CD14-positive monocyte (primary cell): ENCODE measurements at regions of chr13 and their contacts with region 1.

Region 1: GRCh38 chr13:76903544-76904162 is 17.4 kb upstream of the KCTD12 start:
- DNase-seq: peak; percentile 79 to 88 (median 82)
- H3K4me3 ChIP-seq: no peak overlapping the region
- H3K4me3 Mint-ChIP-seq: no peak overlapping the region
- H3K27ac ChIP-seq: no peak overlapping the region
- H3K27ac Mint-ChIP-seq: no peak overlapping the region
- H3K4me1 ChIP-seq: no peaks in the 10 kb centered on the region
- H3K4me1 Mint-ChIP-seq: peaks cover 4% of the 10 kb centered on the region
- H3K27me3 ChIP-seq: peaks cover 0 to 6% of the 10 kb centered on the region in 2 donors
- H3K27me3 Mint-ChIP-seq: peaks cover 4 to 8% (median 6%) of the 10 kb centered on the region in 3 donors
- CTCF ChIP-seq: peak; percentile 99

Region 2: GRCh38 chr13:75691183-75691582 is 1212.5 kb before region 1 on chr13:
- intact Hi-C with region 1: loop called in 1 of 2 experiments (anchors 5 kb)
- DNase-seq: no peak
- H3K4me3 ChIP-seq: no peak overlapping the region
- H3K4me3 Mint-ChIP-seq: no peak overlapping the region
- H3K27ac ChIP-seq: no peak overlapping the region
- H3K27ac Mint-ChIP-seq: no peak overlapping the region
- H3K4me1 ChIP-seq: no peaks in the 10 kb centered on the region
- H3K4me1 Mint-ChIP-seq: no peaks in the 10 kb centered on the region
- H3K27me3 ChIP-seq: no peaks in the 10 kb centered on the region
- H3K27me3 Mint-ChIP-seq: no peaks in the 10 kb centered on the region
- CTCF ChIP-seq: no peak

Region 3: GRCh38 chr13:75864718-75865117 is 1038.9 kb before region 1 on chr13:
- intact Hi-C with region 1: loop called in 1 of 2 experiments (anchors 5 kb)
- DNase-seq: no peak
- H3K4me3 ChIP-seq: no peak overlapping the region
- H3K4me3 Mint-ChIP-seq: no peak overlapping the region
- H3K27ac ChIP-seq: no peak overlapping the region
- H3K27ac Mint-ChIP-seq: no peak overlapping the region
- H3K4me1 ChIP-seq: no peaks in the 10 kb centered on the region
- H3K4me1 Mint-ChIP-seq: no peaks in the 10 kb centered on the region
- H3K27me3 ChIP-seq: no peaks in the 10 kb centered on the region
- H3K27me3 Mint-ChIP-seq: peaks cover 0 to 5% (median 4%) of the 10 kb centered on the region in 3 donors
- CTCF ChIP-seq: no peak

Region 4: DNA sequence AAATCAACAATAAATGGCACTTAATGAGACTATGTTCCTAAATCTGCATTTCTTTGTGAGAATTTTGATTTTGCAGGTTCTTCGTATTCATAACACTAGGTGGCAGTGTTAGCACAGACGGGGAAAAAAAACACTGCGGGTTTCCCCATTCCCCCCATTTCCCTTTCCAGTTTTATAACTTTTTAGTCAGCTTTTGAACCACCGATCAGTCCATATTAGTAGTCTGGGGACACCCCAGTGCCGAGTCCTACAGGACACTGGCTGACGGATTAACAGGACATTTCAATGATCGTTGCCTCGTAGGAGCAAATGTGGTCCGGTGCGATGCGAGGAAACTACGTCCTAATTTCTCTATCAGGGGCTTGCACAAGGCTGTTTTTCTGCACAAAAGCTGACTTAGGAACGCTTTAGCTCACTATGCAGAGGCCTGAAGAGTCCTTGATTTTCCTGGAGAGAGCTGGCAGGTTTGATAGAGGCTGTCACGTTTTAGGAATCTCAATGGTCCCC is 1033.2 kb before region 1 on chr13:
- intact Hi-C with region 1: loop called (anchors 5 kb)
- DNase-seq: peak; percentile 11 to 32 (median 26)
- H3K4me3 ChIP-seq: peak overlapping the region in 2 of 3 experiments; percentile 3 to 49
- H3K4me3 Mint-ChIP-seq: peak overlapping the region; percentile 59 to 69
- H3K27ac ChIP-seq: no peak overlapping the region
- H3K27ac Mint-ChIP-seq: no peak overlapping the region
- H3K4me1 ChIP-seq: peaks cover 14 to 16% of the 10 kb centered on the region in 2 donors
- H3K4me1 Mint-ChIP-seq: peaks cover 22% of the 10 kb centered on the region
- H3K27me3 ChIP-seq: peaks cover 0 to 2% of the 10 kb centered on the region in 2 donors
- H3K27me3 Mint-ChIP-seq: peaks cover 3 to 5% (median 4%) of the 10 kb centered on the region in 3 donors
- CTCF ChIP-seq: peak; percentile 91

Region 5: GRCh38 chr13:76473552-76474134 is 430.0 kb before region 1 on chr13:
- intact Hi-C with region 1: loop called in 1 of 2 experiments (anchors 10 kb)
- DNase-seq: peak; percentile 66 to 76 (median 70)
- H3K4me3 ChIP-seq: no peak overlapping the region
- H3K4me3 Mint-ChIP-seq: no peak overlapping the region
- H3K27ac ChIP-seq: no peak overlapping the region
- H3K27ac Mint-ChIP-seq: no peak overlapping the region
- H3K4me1 ChIP-seq: no peaks in the 10 kb centered on the region
- H3K4me1 Mint-ChIP-seq: no peaks in the 10 kb centered on the region
- H3K27me3 ChIP-seq: no peaks in the 10 kb centered on the region
- H3K27me3 Mint-ChIP-seq: peaks cover 0 to 2% (median 1%) of the 10 kb centered on the region in 3 donors
- CTCF ChIP-seq: peak; percentile 87

Region 6: GRCh38 chr13:76667551-76667950 is 236.1 kb before region 1 on chr13:
- intact Hi-C with region 1: loop called (anchors 5 to 10 kb)
- DNase-seq: peak; percentile 41 to 70 (median 52)
- H3K4me3 ChIP-seq: no peak overlapping the region
- H3K4me3 Mint-ChIP-seq: no peak overlapping the region
- H3K27ac ChIP-seq: no peak overlapping the region
- H3K27ac Mint-ChIP-seq: peak overlapping the region in 3 of 7 donors; percentile 24 to 41 (median 25)
- H3K4me1 ChIP-seq: peaks cover 20 to 28% of the 10 kb centered on the region in 2 donors
- H3K4me1 Mint-ChIP-seq: peaks cover 42% of the 10 kb centered on the region
- H3K27me3 ChIP-seq: no peaks in the 10 kb centered on the region
- H3K27me3 Mint-ChIP-seq: peaks cover 0 to under 1% (median 0%) of the 10 kb centered on the region in 3 donors
- CTCF ChIP-seq: peak; percentile 52